Aorta (tissue), 5 donors: ENCODE measurements at regions of chr17 and their contacts with region 1.

Region 1: DNA sequence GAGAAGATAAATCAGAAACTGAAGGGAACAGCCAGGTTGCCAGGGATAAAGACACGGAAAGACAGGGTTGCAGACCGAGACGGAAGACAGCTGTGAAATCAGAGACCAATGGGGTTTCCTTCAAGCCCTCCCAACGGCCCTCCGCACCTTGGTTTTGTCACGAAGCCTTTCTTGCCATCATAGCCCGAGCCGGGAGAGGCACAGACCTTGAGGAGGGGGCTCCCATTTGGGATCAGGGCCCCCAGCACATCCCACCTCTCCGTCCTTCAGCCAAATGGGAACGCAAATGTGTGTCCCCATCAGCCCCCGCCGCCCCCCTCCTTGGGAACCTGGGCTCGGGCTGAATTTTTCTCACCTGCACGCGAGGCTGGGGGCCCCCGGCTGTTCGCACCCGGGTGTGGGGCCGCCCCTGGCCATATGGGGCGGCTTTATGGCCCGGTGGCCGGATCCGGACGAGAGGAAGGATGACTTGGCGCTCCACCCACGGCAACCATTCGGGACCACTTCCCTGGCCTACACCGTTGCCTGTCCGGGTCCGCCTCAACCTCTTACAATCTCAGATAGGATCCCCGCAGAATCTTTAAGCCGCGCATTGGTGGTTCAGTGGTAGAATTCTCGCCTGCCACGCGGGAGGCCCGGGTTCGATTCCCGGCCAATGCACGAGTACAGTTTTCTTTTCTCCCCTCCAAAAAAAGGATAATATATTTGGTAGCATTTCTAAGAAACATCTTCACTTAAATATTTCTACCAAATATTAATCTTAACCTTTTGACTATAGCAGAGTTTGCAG is 1.4 kb upstream of the HES7 start:
- DNase-seq: peak; percentile 80 to 90
- ATAC-seq: peak; percentile 80
- H3K4me3 ChIP-seq: peak overlapping the region; percentile 57 to 81
- H3K27ac ChIP-seq: no peak overlapping the region
- H3K4me1 ChIP-seq: peaks cover 0 to 2% of the 10 kb centered on the region in 2 donors
- H3K27me3 ChIP-seq: no peaks in the 10 kb centered on the region

Region 2: DNA sequence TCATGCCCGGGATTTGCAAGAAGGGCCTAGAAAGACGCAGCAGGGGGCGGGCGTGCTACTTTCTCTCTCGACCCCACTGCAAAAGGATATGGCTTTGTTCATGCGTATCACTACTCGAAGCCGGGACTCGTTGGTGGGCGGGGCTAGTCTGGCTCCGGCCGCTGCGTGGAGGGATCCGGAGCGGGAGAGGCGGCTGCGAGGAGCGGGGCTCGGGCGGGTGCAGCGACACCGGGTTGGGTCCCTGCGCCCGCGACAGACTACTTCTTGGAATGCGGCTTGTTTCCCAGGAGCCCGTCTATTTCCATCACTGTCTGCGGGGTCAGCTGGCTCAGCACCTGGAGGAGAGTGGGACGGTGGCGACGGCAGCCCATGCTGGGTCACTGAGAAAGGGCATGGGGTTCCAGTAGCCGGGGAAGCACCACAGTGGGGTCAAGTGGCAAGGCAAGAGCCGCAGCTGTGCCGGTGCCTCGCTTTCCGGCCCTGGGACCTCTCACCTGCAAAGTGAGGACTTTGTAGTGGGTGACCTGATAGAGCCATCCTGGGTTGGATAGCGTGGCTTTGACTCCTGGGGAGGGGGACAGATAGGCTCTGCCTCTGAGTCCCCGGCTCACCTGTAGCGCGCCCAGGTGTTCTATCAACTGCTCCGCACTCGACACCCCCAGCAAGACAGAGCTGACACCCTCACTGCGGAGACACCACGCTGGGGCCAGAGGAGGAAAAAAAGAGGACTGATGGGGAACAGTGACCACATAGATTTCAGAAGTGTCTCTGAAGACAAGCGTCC is 202.3 kb before region 1 on chr17:
- intact Hi-C with region 1: no loop called
- DNase-seq: peak; percentile 92 to 94
- ATAC-seq: peak; percentile 92
- H3K4me3 ChIP-seq: peak overlapping the region in 1 of 2 donors; percentile 21
- H3K27ac ChIP-seq: no peak overlapping the region
- H3K4me1 ChIP-seq: no peaks in the 10 kb centered on the region
- H3K27me3 ChIP-seq: no peaks in the 10 kb centered on the region

Region 3: DNA sequence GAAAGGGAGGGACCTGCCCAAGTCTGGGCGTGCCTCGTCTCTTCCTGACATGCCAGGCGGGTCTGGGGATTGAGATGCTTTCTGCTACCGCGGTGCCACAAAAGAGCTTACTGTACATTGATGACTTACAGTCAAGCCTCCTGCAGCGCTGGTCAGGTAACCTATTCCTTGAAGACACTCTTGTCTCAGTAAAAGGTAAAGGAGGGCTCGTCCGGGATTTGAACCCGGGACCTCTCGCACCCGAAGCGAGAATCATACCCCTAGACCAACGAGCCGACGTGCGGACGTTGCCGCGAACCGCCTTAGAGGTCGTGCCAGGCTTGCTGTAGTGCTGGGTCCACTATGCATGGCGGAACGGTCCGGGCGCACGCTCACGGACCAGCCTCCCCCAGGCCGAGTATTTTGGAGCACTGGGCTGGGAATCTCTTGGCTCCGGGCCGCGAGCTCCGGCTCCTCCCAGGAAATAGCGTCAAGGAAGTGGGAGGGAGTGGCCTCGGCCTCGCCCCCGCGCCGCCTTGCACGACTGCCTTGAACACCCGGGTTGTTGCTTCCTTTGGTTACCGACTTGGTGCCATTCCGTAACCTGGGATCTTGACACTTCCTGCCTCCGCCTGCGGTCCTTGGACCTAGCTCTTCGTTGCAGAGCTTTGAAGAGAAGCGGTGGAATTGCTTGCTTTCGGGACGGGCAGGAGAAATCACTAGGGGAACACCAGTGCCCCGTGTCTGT is 97.4 kb after region 1 on chr17:
- intact Hi-C with region 1: loop called in 1 of 2 experiments (anchors 2 kb)
- DNase-seq: peak; percentile 97
- ATAC-seq: peak; percentile 88
- H3K4me3 ChIP-seq: peak overlapping the region; percentile 48 to 62
- H3K27ac ChIP-seq: peak overlapping the region; percentile 40 to 95
- H3K4me1 ChIP-seq: no peaks in the 10 kb centered on the region
- H3K27me3 ChIP-seq: no peaks in the 10 kb centered on the region

Region 4: GRCh38 chr17:8435245-8436168 is 310.2 kb after region 1 on chr17 and contains the start of gene NDEL1:
- intact Hi-C with region 1: no loop called
- DNase-seq: peak; percentile 100
- ATAC-seq: peak; percentile 97
- H3K4me3 ChIP-seq: peak within 1 kb of the TSS; percentile 63 to 92
- H3K27ac ChIP-seq: peak within 1 kb of the TSS; percentile 94 to 99
- H3K4me1 ChIP-seq: peaks cover 0 to 3% of the 10 kb centered on the region in 2 donors
- H3K27me3 ChIP-seq: no peaks in the 10 kb centered on the region
- total RNA-seq, gene NDEL1: 110 to 135 TPM